ENCODE measurements at regions of chr11 and their contacts with region 1.

Region 1: GRCh38 chr11:20046416-20046815 is 113.9 kb downstream of the DBX1 start:
- DNase-seq: no peak
- H3K4me3 ChIP-seq: no peak overlapping the region
- H3K27ac ChIP-seq: peak overlapping the region; percentile 58
- H3K4me1 ChIP-seq: peaks cover 61% of the 10 kb centered on the region
- H3K27me3 ChIP-seq: no peaks in the 10 kb centered on the region
- CTCF ChIP-seq: no peak

Region 2: GRCh38 chr11:20035701-20036620 is 10.5 kb before region 1 on chr11:
- CTCF ChIA-PET with region 1: no interaction called
- dilution Hi-C with region 1: no loop called
- in situ Hi-C with region 1: no loop called
- intact Hi-C with region 1: loop called (anchors 2 kb)
- DNase-seq: peak; percentile 98
- H3K4me3 ChIP-seq: no peak overlapping the region
- H3K27ac ChIP-seq: peak overlapping the region; percentile 41
- H3K4me1 ChIP-seq: peaks cover 46% of the 10 kb centered on the region
- H3K27me3 ChIP-seq: no peaks in the 10 kb centered on the region
- CTCF ChIP-seq: peak in 1 of 2 donors; percentile 9

Region 3: GRCh38 chr11:20080032-20080685 is 33.7 kb after region 1 on chr11:
- CTCF ChIA-PET with region 1: no interaction called
- dilution Hi-C with region 1: no loop called
- in situ Hi-C with region 1: no loop called
- intact Hi-C with region 1: no loop called
- DNase-seq: no peak
- H3K4me3 ChIP-seq: no peak overlapping the region
- H3K27ac ChIP-seq: no peak overlapping the region
- H3K4me1 ChIP-seq: no peaks in the 10 kb centered on the region
- H3K27me3 ChIP-seq: no peaks in the 10 kb centered on the region
- CTCF ChIP-seq: no peak

Measured in mammary epithelial cell (primary cell).